ENCODE measurements at regions of chr11 and their contacts with region 1.

Region 1: GRCh38 chr11:130131961-130132850 is 27.4 kb upstream of the ST14 start:
- DNase-seq: peak; percentile 77
- H3K27ac ChIP-seq: no peak overlapping the region
- CTCF ChIP-seq: peak; percentile 89

Region 2: GRCh38 chr11:129922674-129923073 is 209.5 kb before region 1 on chr11:
- CTCF ChIA-PET with region 1: interaction called, 17 read pairs
- POLR2A ChIA-PET with region 1: no interaction called
- DNase-seq: no peak
- H3K27ac ChIP-seq: no peak overlapping the region
- CTCF ChIP-seq: no peak

Region 3: GRCh38 chr11:129992161-129992944 is 139.9 kb before region 1 on chr11:
- CTCF ChIA-PET with region 1: interaction called, 20 read pairs
- POLR2A ChIA-PET with region 1: no interaction called
- DNase-seq: peak; percentile 65
- H3K27ac ChIP-seq: no peak overlapping the region
- CTCF ChIP-seq: no peak

Region 4: GRCh38 chr11:130115218-130115617 is 17.0 kb before region 1 on chr11:
- CTCF ChIA-PET with region 1: no interaction called
- POLR2A ChIA-PET with region 1: no interaction called
- DNase-seq: no peak
- H3K27ac ChIP-seq: no peak overlapping the region
- CTCF ChIP-seq: no peak

Region 5: DNA sequence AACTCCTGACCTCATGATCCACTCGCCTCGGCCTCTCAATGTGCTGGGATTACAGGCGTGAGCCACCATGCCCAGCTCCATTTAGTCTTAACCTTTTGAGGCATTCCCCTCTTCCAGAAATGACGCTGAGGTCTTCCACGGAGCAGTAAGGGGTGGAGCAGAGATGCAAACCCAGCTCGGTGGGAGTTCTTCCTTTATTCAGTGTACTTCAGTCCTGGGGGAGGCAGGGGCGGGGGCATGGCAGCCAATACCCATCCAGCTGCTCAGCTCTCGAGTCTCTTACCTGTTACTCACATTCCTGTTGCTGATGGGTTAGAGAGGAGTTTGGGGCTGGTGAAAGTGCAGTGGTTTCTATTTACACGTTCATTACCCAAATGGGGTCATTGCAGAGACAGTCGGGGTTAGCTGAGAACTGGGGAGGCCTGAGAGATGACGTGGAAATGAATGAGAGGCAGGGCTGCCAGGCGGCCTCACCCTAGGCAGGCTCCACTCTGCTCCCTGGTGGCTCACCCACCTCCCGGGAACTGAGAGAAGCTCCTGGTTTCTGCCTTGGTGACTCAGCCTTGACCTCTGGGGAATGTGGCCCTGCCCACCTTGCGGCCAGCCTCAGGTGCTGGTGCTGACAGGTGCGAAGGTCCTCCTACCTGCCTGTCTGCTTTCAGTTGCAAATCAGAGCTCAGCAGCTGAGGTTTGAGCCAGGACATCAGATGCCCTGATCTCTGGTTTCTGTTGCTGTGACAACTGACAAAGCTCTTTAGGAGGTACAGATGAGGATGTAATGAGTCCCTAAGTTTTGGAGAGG is 14.0 kb after region 1 on chr11:
- CTCF ChIA-PET with region 1: interaction called, 11 read pairs
- POLR2A ChIA-PET with region 1: interaction called, 10 read pairs
- DNase-seq: peak; percentile 93
- H3K27ac ChIP-seq: peak overlapping the region; percentile 49
- CTCF ChIP-seq: no peak

Measured in RWPE1 (cell line).